Ovary (tissue), 10 donors: ENCODE measurements at regions of chr5 and their contacts with region 1.

Region 1: GRCh38 chr5:25224316-25224982 is 579.7 kb upstream of the CDH10 start:
- DNase-seq: no peak
- H3K4me3 ChIP-seq: no peak overlapping the region
- H3K27ac ChIP-seq: no peak overlapping the region
- H3K4me1 ChIP-seq: no peaks in the 10 kb centered on the region
- H3K27me3 ChIP-seq: no peaks in the 10 kb centered on the region
- CTCF ChIP-seq: no peak
- EP300 ChIP-seq: no peak
- POLR2A ChIP-seq: no peak

Region 2: GRCh38 chr5:25255136-25255535 is 30.7 kb after region 1 on chr5:
- intact Hi-C with region 1: no loop called
- DNase-seq: no peak
- H3K4me3 ChIP-seq: no peak overlapping the region
- H3K27ac ChIP-seq: no peak overlapping the region
- H3K4me1 ChIP-seq: no peaks in the 10 kb centered on the region
- H3K27me3 ChIP-seq: no peaks in the 10 kb centered on the region
- CTCF ChIP-seq: no peak
- EP300 ChIP-seq: no peak
- POLR2A ChIP-seq: no peak

Region 3: DNA sequence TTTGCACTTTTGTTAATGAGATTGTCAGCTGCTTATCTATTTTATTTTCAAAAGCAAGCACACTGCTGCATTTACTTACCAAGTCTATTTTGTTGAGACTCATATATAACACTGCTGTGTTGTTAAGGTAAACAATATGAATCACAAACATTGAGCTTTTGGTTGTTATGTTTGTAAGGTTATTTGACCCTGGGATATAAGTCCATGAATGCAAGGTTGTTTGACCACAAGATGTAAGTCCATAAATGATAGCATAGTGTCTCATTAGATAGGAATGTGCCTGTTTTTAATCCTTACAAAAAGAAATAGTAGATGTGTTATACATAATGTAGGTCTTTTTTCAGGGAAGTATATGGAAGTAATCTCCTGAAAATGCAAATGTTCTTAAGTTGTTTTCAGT is 968.0 kb after region 1 on chr5:
- intact Hi-C with region 1: loop called in 1 of 4 experiments (anchors 10 kb)
- DNase-seq: no peak
- H3K4me3 ChIP-seq: no peak overlapping the region
- H3K27ac ChIP-seq: no peak overlapping the region
- H3K4me1 ChIP-seq: no peaks in the 10 kb centered on the region
- H3K27me3 ChIP-seq: no peaks in the 10 kb centered on the region
- CTCF ChIP-seq: no peak
- EP300 ChIP-seq: no peak
- POLR2A ChIP-seq: no peak